ENCODE measurements at regions of chr11 and their contacts with region 1.

Region 1: GRCh38 chr11:102940714-102941588 is 14.6 kb downstream of the MMP13 start:
- H3K4me3 ChIP-seq: no peak overlapping the region
- H3K27ac ChIP-seq: no peak overlapping the region
- H3K4me1 ChIP-seq: no peaks in the 10 kb centered on the region
- CTCF ChIP-seq: peak; percentile 37

Region 2: GRCh38 chr11:102733232-102733875 is 207.6 kb before region 1 on chr11:
- CTCF ChIA-PET with region 1: interaction called, 38 read pairs
- POLR2A ChIA-PET with region 1: no interaction called
- H3K4me3 ChIP-seq: no peak overlapping the region
- H3K27ac ChIP-seq: no peak overlapping the region
- H3K4me1 ChIP-seq: no peaks in the 10 kb centered on the region
- CTCF ChIP-seq: peak; percentile 46; the same call in 1 of the 2 replicates

Region 3: GRCh38 chr11:102791271-102792036 is 149.5 kb before region 1 on chr11:
- CTCF ChIA-PET with region 1: interaction called, 11 read pairs
- POLR2A ChIA-PET with region 1: no interaction called
- H3K4me3 ChIP-seq: no peak overlapping the region
- H3K27ac ChIP-seq: no peak overlapping the region
- H3K4me1 ChIP-seq: no peaks in the 10 kb centered on the region
- CTCF ChIP-seq: no peak

Region 4: GRCh38 chr11:102914238-102915043 is 26.5 kb before region 1 on chr11:
- CTCF ChIA-PET with region 1: interaction called, 16 read pairs
- POLR2A ChIA-PET with region 1: no interaction called
- H3K4me3 ChIP-seq: no peak overlapping the region
- H3K27ac ChIP-seq: no peak overlapping the region
- H3K4me1 ChIP-seq: no peaks in the 10 kb centered on the region
- CTCF ChIP-seq: 0 out of 2 replicates have a peak, but pooled peaks have one; percentile 10

Region 5: GRCh38 chr11:102920118-102920684 is 20.8 kb before region 1 on chr11:
- CTCF ChIA-PET with region 1: interaction called, 16 read pairs
- POLR2A ChIA-PET with region 1: no interaction called
- H3K4me3 ChIP-seq: no peak overlapping the region
- H3K27ac ChIP-seq: no peak overlapping the region
- H3K4me1 ChIP-seq: no peaks in the 10 kb centered on the region
- CTCF ChIP-seq: no peak

Region 6: GRCh38 chr11:102927624-102927990 is 13.3 kb before region 1 on chr11:
- CTCF ChIA-PET with region 1: interaction called, 11 read pairs
- POLR2A ChIA-PET with region 1: no interaction called
- H3K4me3 ChIP-seq: no peak overlapping the region
- H3K27ac ChIP-seq: no peak overlapping the region
- H3K4me1 ChIP-seq: no peaks in the 10 kb centered on the region
- CTCF ChIP-seq: no peak

Region 7: DNA sequence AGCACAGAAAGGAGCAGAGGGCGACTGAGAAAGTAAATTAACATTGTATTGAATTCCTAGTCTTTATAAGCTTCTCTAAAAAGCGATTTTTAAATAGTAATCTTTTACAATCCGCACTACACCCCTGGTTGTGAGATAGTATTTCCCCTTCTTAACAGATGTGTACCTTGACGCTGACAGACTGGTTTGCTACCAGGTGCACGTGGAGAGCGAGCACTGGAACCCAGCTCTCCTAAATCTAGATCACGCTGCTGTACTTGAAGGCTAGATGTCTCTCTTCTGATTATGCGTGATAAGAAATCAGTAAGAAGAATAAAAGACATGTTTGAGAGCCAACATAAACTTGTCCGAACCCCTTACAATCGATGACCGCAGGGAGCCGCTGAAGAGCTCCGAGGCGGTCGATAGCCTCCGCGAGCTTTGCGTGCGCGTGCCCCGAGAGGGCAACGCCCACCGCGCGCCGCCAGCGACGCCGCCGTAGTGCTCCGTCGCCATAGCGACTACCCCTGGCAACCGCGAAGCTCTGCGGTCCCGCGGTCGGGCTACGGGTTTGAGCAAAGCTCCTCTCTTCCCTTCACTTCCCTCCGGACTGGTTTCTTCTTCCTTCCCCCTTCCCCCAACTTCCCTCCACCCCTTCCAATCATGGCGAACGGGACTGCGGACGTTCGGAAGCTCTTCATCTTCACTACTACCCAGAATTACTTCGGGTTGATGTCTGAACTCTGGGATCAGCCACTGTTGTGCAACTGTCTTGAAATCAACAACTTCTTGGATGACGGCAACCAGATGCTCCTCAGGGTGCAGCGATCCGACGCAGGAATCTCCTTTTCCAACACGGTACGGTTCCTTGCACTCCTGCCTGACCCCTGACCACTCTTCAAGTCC is 168.2 kb after region 1 on chr11 and contains the start of gene DYNC2H1:
- CTCF ChIA-PET with region 1: no interaction called
- POLR2A ChIA-PET with region 1: no interaction called
- H3K4me3 ChIP-seq: peak within 1 kb of the TSS; percentile 88
- H3K27ac ChIP-seq: peak within 1 kb of the TSS; percentile 54
- H3K4me1 ChIP-seq: no peaks in the 10 kb centered on the region
- CTCF ChIP-seq: peak; percentile 57; the same call in 1 of the 2 replicates